Aorta (tissue), 5 donors: ENCODE measurements at regions of chr3 and their contacts with region 1.

Region 1: GRCh38 chr3:157174649-157175498 is 14.9 kb upstream of the CCNL1 start:
- DNase-seq: peak; percentile 100
- ATAC-seq: peak; percentile 100
- H3K4me3 ChIP-seq: peak overlapping the region; percentile 75 to 82
- H3K27ac ChIP-seq: peak overlapping the region; percentile 94 to 96
- H3K4me1 ChIP-seq: no peaks in the 10 kb centered on the region
- H3K27me3 ChIP-seq: no peaks in the 10 kb centered on the region

Region 2: GRCh38 chr3:157033001-157033400 is 141.9 kb before region 1 on chr3:
- intact Hi-C with region 1: no loop called
- DNase-seq: no peak
- ATAC-seq: no peak
- H3K4me3 ChIP-seq: no peak overlapping the region
- H3K27ac ChIP-seq: no peak overlapping the region
- H3K4me1 ChIP-seq: no peaks in the 10 kb centered on the region
- H3K27me3 ChIP-seq: no peaks in the 10 kb centered on the region

Region 3: GRCh38 chr3:157159762-157160657 is 14.9 kb before region 1 on chr3 and contains the start of gene CCNL1:
- intact Hi-C with region 1: loop called (anchors 1 kb)
- DNase-seq: peak; percentile 98 to 99
- ATAC-seq: peak; percentile 99
- H3K4me3 ChIP-seq: peak within 1 kb of the TSS; percentile 92
- H3K27ac ChIP-seq: peak within 1 kb of the TSS; percentile 99 to 100
- H3K4me1 ChIP-seq: no peaks in the 10 kb centered on the region
- H3K27me3 ChIP-seq: no peaks in the 10 kb centered on the region
- total RNA-seq, gene CCNL1: 159 to 189 TPM

Region 4: GRCh38 chr3:157317895-157318294 is 143.0 kb after region 1 on chr3:
- intact Hi-C with region 1: no loop called
- DNase-seq: no peak
- ATAC-seq: no peak
- H3K4me3 ChIP-seq: no peak overlapping the region
- H3K27ac ChIP-seq: no peak overlapping the region
- H3K4me1 ChIP-seq: no peaks in the 10 kb centered on the region
- H3K27me3 ChIP-seq: no peaks in the 10 kb centered on the region